B cell (primary cell): ENCODE measurements at regions of chr3 and their contacts with region 1.

Region 1: DNA sequence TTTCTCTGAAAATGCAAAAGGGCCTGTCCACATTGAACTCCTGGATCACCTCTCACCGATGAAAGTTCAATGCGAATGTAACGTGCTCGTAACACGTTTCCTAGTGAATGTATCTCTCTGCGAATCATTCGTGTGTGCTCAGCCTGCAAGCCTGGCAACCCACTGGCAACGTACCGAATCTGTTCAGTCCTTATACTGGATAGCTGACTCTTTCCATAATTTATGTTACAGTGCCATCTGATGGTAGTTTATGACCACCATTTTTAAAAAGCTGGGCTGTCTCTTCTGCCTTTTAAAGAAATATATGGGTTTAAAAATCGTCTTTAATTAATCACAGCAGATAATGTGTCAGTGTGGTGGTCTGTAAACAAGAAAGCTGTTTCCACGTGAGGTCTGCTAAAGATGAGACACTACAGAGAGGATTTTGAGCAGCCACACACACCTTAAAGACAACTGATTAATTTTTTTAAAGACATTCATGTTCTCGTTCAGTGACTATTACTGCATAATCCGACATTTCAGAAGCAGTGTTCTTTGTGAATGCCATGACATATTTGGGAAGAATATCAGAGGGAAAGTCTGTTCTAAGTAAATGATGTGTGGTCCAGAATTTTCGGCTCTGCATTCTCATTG is 69.4 kb upstream of the FOXP1 start:
- DNase-seq: peak; percentile 69
- ATAC-seq: peak; percentile 45
- H3K4me3 ChIP-seq: no peak overlapping the region
- H3K4me3 Mint-ChIP-seq: no peak overlapping the region
- H3K27ac ChIP-seq: no peak overlapping the region
- H3K27ac Mint-ChIP-seq: no peak overlapping the region
- H3K4me1 ChIP-seq: peaks cover 0 to 3% of the 10 kb centered on the region in 2 donors
- H3K4me1 Mint-ChIP-seq: peaks cover 3% of the 10 kb centered on the region
- H3K27me3 ChIP-seq: no peaks in the 10 kb centered on the region
- H3K27me3 Mint-ChIP-seq: peaks cover 6% of the 10 kb centered on the region
- CTCF ChIP-seq: peak; percentile 80

Region 2: GRCh38 chr3:70064194-70064779 is 1588.6 kb before region 1 on chr3:
- CTCF ChIA-PET with region 1: interaction called, 19 read pairs
- POLR2A ChIA-PET with region 1: no interaction called
- intact Hi-C with region 1: no loop called
- DNase-seq: peak; percentile 38
- ATAC-seq: no peak
- H3K4me3 ChIP-seq: no peak overlapping the region
- H3K4me3 Mint-ChIP-seq: no peak overlapping the region
- H3K27ac ChIP-seq: no peak overlapping the region
- H3K27ac Mint-ChIP-seq: no peak overlapping the region
- H3K4me1 ChIP-seq: no peaks in the 10 kb centered on the region
- H3K4me1 Mint-ChIP-seq: no peaks in the 10 kb centered on the region
- H3K27me3 ChIP-seq: peaks cover 0 to 2% (median 0%) of the 10 kb centered on the region in 4 experiments
- H3K27me3 Mint-ChIP-seq: peaks cover 15% of the 10 kb centered on the region
- CTCF ChIP-seq: peak; percentile 74

Region 3: DNA sequence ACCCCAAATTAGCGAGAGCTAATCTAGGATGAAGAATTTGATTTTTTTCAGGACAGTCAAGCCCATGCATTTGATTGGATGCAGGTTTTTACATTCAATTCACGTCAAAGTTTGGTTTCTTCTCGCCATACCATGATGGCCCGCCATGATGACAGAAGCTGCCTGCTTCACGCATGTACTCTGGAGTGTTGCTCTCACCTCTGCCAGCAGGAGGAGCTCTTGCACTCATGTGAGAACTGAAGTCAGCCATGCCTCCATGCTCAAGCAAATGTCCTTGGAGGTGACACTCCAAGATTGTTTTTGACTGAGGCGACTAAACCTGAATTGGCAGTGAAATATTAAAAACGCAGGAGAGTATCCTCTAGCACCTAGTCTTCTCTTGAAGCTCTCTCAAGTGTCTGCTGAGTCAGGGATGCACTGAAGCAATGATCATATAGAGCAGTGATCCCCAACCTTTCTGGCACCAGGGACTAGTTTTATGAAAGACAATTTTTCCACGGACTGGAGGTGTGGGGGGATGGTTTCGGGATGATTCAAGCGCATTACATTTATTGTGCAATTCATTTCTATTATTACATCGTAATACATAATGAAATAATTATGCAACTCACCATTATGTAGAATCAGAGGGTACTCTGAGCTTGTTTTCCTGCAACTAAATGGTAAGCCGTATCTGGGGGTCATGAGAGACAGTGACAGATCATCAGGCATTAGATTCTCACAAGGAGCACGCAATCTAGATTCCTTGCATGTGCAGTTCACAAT is 1532.4 kb before region 1 on chr3:
- CTCF ChIA-PET with region 1: interaction called, 28 read pairs
- POLR2A ChIA-PET with region 1: no interaction called
- intact Hi-C with region 1: loop called (anchors 1 kb)
- DNase-seq: peak; percentile 62
- ATAC-seq: no peak
- H3K4me3 ChIP-seq: no peak overlapping the region
- H3K4me3 Mint-ChIP-seq: no peak overlapping the region
- H3K27ac ChIP-seq: no peak overlapping the region
- H3K27ac Mint-ChIP-seq: no peak overlapping the region
- H3K4me1 ChIP-seq: no peaks in the 10 kb centered on the region
- H3K4me1 Mint-ChIP-seq: no peaks in the 10 kb centered on the region
- H3K27me3 ChIP-seq: no peaks in the 10 kb centered on the region
- H3K27me3 Mint-ChIP-seq: peaks cover 20% of the 10 kb centered on the region
- CTCF ChIP-seq: peak; percentile 78

Region 4: DNA sequence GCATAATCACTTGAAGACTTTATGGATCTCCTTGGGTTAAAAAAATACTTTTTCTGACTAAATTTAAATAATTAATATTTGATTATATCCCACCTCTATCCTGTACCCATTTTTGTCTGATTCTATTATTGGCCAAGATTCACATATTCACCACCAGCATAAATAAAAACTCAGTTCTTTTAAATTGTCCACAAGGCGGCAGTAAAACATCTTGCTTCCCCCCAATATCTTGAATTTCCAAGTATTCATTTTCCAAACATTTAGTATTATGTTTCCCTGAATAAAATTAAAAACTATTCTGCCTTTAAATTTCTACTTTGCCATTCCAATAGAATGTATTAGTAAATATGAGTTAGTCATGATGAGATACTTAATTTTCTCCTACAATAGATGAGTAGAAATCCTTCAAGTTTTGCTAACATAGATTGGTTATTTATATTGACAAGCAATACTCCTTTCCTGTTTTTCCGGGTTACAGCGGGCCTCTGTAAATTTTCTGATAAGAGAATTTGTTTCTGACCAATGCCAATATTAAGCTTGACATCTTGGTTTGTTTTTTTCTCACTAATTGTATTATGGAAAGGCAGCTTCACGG is 1121.7 kb before region 1 on chr3:
- CTCF ChIA-PET with region 1: interaction called, 6 read pairs
- POLR2A ChIA-PET with region 1: no interaction called
- intact Hi-C with region 1: loop called (anchors 1 kb)
- DNase-seq: peak; percentile 10
- ATAC-seq: no peak
- H3K4me3 ChIP-seq: no peak overlapping the region
- H3K4me3 Mint-ChIP-seq: no peak overlapping the region
- H3K27ac ChIP-seq: no peak overlapping the region
- H3K27ac Mint-ChIP-seq: no peak overlapping the region
- H3K4me1 ChIP-seq: no peaks in the 10 kb centered on the region
- H3K4me1 Mint-ChIP-seq: no peaks in the 10 kb centered on the region
- H3K27me3 ChIP-seq: no peaks in the 10 kb centered on the region
- H3K27me3 Mint-ChIP-seq: peaks cover 4% of the 10 kb centered on the region
- CTCF ChIP-seq: peak; percentile 61

Region 5: DNA sequence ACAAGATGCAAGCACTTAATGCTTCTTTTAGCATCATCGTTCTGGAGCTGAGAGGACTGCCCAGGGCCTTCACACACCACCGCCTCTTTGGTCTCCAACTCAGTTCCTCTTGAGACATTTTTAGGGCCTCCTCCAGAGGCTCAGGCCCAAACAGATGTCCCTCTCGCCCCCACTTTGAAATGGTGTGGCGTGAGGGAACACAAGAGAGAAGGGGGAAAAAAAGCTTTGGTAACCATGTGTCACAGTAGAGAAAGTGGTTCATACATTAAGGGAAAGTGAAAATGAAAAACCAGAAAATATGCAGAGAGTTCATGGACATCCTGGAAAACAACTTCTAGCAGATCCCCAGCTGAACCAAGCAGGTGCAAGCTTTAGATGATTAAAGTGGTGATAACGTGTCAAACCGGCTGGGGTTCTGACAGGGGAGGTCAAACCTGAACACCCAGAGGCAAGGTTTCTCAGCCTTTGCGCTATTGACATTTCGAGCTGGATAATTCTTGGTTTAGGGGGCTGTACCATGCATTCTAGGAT is 36.3 kb before region 1 on chr3:
- CTCF ChIA-PET with region 1: no interaction called
- POLR2A ChIA-PET with region 1: no interaction called
- intact Hi-C with region 1: no loop called
- DNase-seq: no peak
- ATAC-seq: no peak
- H3K4me3 ChIP-seq: no peak overlapping the region
- H3K4me3 Mint-ChIP-seq: no peak overlapping the region
- H3K27ac ChIP-seq: no peak overlapping the region
- H3K27ac Mint-ChIP-seq: no peak overlapping the region
- H3K4me1 ChIP-seq: peaks cover 0 to 4% of the 10 kb centered on the region in 2 donors
- H3K4me1 Mint-ChIP-seq: peaks cover 4% of the 10 kb centered on the region
- H3K27me3 ChIP-seq: peaks cover 0 to 3% (median 0%) of the 10 kb centered on the region in 4 experiments
- H3K27me3 Mint-ChIP-seq: peaks cover 6% of the 10 kb centered on the region
- CTCF ChIP-seq: no peak

Region 6: DNA sequence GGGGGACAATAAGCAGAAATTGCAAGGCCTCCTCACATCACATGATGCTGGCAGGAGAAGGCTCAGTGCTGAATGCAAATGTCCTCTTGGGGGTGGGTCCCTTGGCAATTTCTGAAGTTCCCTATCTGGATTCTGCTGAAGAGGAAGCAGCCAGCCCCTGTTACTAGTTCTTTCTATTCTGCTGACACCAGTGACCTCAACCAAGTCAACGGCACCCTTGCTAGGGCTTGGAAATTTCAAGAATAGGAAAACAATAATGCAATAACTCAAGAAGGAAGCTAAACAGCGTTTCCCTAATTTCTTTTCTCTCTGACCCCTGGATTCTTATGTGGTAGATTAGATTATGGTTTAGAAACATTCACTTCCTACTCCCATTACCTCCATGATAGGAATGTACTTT is 23.2 kb before region 1 on chr3:
- CTCF ChIA-PET with region 1: no interaction called
- POLR2A ChIA-PET with region 1: no interaction called
- intact Hi-C with region 1: no loop called
- DNase-seq: peak; percentile 32
- ATAC-seq: peak; percentile 62
- H3K4me3 ChIP-seq: no peak overlapping the region
- H3K4me3 Mint-ChIP-seq: no peak overlapping the region
- H3K27ac ChIP-seq: no peak overlapping the region
- H3K27ac Mint-ChIP-seq: no peak overlapping the region
- H3K4me1 ChIP-seq: peaks cover 8% of the 10 kb centered on the region in 2 donors
- H3K4me1 Mint-ChIP-seq: peaks cover 8% of the 10 kb centered on the region
- H3K27me3 ChIP-seq: no peaks in the 10 kb centered on the region
- H3K27me3 Mint-ChIP-seq: no peaks in the 10 kb centered on the region
- CTCF ChIP-seq: no peak